Esophagus muscularis mucosa (tissue), 4 donors: ENCODE measurements at regions of chr15 and their contacts with region 1.

Region 1: DNA sequence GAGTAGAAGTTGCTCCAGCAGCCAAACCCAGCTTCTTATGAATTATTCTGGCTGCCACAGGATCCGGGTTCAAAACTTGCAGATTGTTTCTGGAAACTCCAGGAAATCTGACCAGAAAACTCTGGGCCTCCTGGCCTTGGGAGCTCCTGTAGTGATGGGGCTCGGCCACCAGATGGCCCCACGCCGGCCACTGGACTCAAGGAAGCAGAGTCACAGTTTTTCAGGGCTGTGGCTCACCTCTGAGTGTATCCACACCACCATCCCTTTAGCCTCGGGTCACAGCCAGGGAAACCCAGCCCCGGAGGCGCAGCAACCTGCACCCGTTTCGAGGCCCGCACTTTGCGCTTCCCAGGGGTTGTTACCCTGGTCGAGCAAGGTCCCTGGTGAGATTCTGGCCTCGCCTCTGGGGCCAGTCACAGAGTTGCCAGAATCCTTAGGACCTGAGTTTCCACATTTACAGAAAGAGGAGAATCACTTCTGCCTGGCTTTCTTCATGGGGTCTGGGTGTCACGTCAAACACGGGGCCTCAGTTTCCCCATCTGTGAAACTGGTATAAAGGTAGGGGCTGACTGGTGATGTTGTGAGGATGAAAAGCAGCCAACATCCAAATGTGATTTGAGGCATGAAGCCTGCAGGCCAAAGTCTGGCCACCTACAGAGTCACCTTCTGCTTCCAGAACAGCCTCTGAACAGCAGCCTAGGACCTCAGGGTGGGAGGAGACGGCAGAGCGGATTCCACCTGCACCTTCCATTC is 53.5 kb upstream of the LCTL start:
- DNase-seq: no peak
- H3K4me3 ChIP-seq: no peak overlapping the region
- H3K27ac ChIP-seq: peak overlapping the region in 2 of 4 donors; percentile 30 to 67
- H3K4me1 ChIP-seq: peaks cover 53 to 56% (median 55%) of the 10 kb centered on the region in 4 donors
- H3K27me3 ChIP-seq: peaks cover 0 to 17% (median 2%) of the 10 kb centered on the region in 4 donors
- CTCF ChIP-seq: peak; percentile 90 to 98 (median 90)
- EP300 ChIP-seq: no peak
- POLR2A ChIP-seq: no peak

Region 2: GRCh38 chr15:66700802-66701421 is 81.6 kb after region 1 on chr15:
- intact Hi-C with region 1: loop called (anchors 2 kb)
- DNase-seq: peak; percentile 98
- H3K4me3 ChIP-seq: peak overlapping the region; percentile 66 to 86 (median 74)
- H3K27ac ChIP-seq: peak overlapping the region; percentile 84 to 92 (median 88)
- H3K4me1 ChIP-seq: peaks cover 20 to 56% (median 42%) of the 10 kb centered on the region in 4 donors
- H3K27me3 ChIP-seq: no peaks in the 10 kb centered on the region
- CTCF ChIP-seq: peak in 1 of 3 experiments; percentile 6
- EP300 ChIP-seq: no peak
- POLR2A ChIP-seq: no peak

Region 3: GRCh38 chr15:66751541-66751952 is 132.2 kb after region 1 on chr15:
- intact Hi-C with region 1: no loop called
- DNase-seq: no peak
- H3K4me3 ChIP-seq: no peak overlapping the region
- H3K27ac ChIP-seq: peak overlapping the region in 1 of 4 donors; percentile 2
- H3K4me1 ChIP-seq: peaks cover 44 to 67% (median 57%) of the 10 kb centered on the region in 4 donors
- H3K27me3 ChIP-seq: no peaks in the 10 kb centered on the region
- CTCF ChIP-seq: no peak
- EP300 ChIP-seq: no peak
- POLR2A ChIP-seq: no peak

Region 4: DNA sequence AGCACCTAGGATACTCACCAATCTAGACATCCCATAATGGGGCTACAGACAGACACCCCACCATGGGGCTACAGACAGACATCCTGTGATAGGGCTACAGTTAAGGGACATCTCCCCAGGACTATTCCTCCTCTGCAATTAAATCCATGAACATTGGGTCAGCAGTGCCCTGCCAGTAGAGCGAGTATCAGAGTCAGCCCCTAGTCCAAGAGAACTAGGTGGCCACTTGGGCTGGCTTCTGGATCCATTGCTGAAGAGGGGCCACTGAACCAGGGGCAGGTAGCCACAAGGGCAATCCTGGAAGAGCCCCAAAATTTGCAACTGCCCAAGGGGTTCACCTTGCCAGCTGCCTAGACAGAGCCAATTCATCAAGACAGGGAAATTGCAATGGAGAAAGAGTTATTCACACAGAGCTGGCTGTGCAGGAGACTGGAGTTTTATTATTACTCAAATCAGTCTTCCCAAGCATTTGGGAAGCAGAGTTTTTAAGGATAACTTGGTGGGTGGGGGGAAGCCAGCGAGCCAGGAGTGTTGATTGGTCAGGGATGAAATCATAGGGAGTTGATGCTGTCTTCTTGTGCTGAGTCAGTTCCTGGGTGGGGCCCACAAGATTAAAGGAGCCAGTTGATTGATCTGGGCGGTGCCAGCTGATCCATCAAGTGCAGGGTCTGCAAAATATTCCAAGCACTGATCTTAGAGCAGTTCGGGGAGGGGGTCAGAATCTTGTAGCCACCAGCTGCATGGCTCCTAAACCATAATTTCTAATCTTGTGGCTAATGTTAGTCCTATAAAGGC is 275.9 kb after region 1 on chr15:
- intact Hi-C with region 1: no loop called
- DNase-seq: peak; percentile 82
- H3K4me3 ChIP-seq: no peak overlapping the region
- H3K27ac ChIP-seq: no peak overlapping the region
- H3K4me1 ChIP-seq: peaks cover 0 to 16% (median 2%) of the 10 kb centered on the region in 4 donors
- H3K27me3 ChIP-seq: no peaks in the 10 kb centered on the region
- CTCF ChIP-seq: no peak
- EP300 ChIP-seq: no peak
- POLR2A ChIP-seq: no peak